Adrenal gland (tissue), 19 donors: ENCODE measurements at regions of chr2 and their contacts with region 1.

Region 1: GRCh38 chr2:200454927-200455801 is 54.7 kb downstream of the KCTD18 start:
- DNase-seq: peak in 5 of 7 donors; percentile 34 to 62 (median 44)
- H3K4me3 ChIP-seq: no peak overlapping the region
- H3K27ac ChIP-seq: peak overlapping the region in 1 of 5 donors; percentile 37
- H3K4me1 ChIP-seq: peaks cover 13 to 17% of the 10 kb centered on the region in 2 donors
- H3K27me3 ChIP-seq: no peaks in the 10 kb centered on the region
- CTCF ChIP-seq: no peak
- POLR2A ChIP-seq: no peak

Region 2: DNA sequence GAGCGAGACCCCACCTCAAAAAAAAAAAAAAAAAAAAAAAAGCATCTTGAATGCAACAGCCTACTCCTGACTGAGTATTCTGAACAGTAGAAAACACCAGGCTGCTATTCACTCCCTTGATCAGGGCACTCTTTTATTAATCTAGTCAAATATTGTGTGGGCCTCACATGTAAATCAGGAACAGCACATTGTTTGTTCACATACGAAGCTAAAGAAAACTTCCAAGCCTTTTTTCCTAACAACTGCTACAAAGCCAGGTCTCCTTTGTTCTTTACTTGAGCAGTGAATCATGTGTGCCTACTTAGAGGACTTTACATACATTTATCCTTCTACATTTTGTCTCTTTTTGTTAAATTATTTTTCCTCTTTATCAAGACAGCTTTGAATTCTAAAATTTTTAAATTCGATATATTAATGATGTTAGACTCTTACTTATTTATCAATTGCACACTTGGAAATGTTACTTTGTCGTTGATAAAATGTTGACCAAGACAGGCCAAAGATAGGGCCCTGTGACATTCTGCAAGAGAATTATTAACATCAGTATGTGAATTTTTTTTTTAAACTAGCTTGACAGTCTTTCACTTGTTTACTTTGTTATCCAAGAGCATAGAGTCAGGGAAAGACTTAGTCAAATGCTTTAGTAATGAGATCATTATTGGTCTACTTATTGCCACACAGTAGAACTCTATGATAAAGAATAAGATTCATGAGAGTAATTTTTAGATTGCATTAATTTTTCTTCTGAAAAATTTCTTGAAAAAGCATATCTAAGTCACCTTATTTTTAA is 135.4 kb before region 1 on chr2:
- intact Hi-C with region 1: loop called in 1 of 2 experiments (anchors 10 kb)
- DNase-seq: no peak
- H3K4me3 ChIP-seq: no peak overlapping the region
- H3K27ac ChIP-seq: peak overlapping the region in 1 of 5 donors; percentile 5
- H3K4me1 ChIP-seq: peaks cover 11 to 22% of the 10 kb centered on the region in 2 donors
- H3K27me3 ChIP-seq: no peaks in the 10 kb centered on the region
- CTCF ChIP-seq: no peak
- POLR2A ChIP-seq: no peak